ENCODE measurements at regions of chr10 and their contacts with region 1.

Region 1: DNA sequence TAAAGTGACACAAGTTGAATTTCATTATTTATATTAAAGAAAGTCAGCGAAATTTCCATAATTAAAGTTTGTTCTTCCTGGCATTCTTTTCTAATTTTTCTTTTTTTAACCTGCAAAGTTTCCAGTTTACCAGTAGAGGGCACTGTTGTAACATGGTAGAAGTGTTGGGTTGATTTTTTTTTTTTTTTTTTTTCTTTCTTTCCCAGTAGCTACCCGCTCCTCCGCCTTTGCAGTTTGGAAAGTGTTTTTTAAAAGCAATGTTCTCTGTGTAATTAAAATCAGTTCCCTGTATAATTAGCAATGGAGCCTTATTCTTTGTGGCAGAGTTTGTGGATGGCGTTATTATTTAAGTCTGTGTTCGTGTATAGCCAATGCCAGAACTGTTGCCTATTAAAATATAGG is 53.7 kb downstream of the TAF3 start:
- DNase-seq: peak in 1 of 2 experiments; percentile 21
- H3K4me3 ChIP-seq: peak overlapping the region; percentile 25
- H3K4me3 Mint-ChIP-seq: peak overlapping the region; percentile 66
- H3K27ac Mint-ChIP-seq: no peak overlapping the region
- H3K4me1 ChIP-seq: peaks cover 26% of the 10 kb centered on the region
- H3K4me1 Mint-ChIP-seq: peaks cover 11% of the 10 kb centered on the region
- H3K27me3 ChIP-seq: no peaks in the 10 kb centered on the region
- H3K27me3 Mint-ChIP-seq: no peaks in the 10 kb centered on the region
- CTCF ChIP-seq: peak; percentile 83

Region 2: DNA sequence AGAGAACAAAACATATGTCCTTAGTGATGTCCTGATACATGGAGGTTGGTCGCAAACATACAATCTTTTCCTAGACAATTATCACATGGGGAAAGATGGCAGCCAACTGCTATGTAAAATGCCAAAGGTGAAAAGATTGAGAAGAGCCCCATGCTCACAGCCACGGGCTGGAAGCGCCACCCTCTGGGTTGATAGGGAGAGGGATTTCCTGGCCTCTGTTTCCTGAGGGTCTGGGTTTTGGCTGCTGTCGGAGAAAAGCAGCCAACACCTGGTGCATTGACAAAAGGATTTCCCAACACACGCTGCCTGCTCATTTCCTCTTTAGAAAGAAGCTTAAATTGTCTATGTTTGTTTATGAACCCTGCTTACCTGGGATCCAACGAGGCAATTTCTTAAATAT is 249.1 kb before region 1 on chr10:
- CTCF ChIA-PET with region 1: no interaction called
- POLR2A ChIA-PET with region 1: no interaction called
- intact Hi-C with region 1: no loop called
- DNase-seq: peak in 1 of 2 experiments; percentile 42
- H3K4me3 ChIP-seq: no peak overlapping the region
- H3K4me3 Mint-ChIP-seq: no peak overlapping the region
- H3K27ac Mint-ChIP-seq: no peak overlapping the region
- H3K4me1 ChIP-seq: no peaks in the 10 kb centered on the region
- H3K4me1 Mint-ChIP-seq: no peaks in the 10 kb centered on the region
- H3K27me3 ChIP-seq: no peaks in the 10 kb centered on the region
- H3K27me3 Mint-ChIP-seq: peaks cover 3% of the 10 kb centered on the region
- CTCF ChIP-seq: peak in 1 of 2 experiments; percentile 46

Region 3: GRCh38 chr10:8136736-8137135 is 264.7 kb after region 1 on chr10:
- CTCF ChIA-PET with region 1: no interaction called
- POLR2A ChIA-PET with region 1: no interaction called
- intact Hi-C with region 1: no loop called
- DNase-seq: no peak
- H3K4me3 ChIP-seq: no peak overlapping the region
- H3K4me3 Mint-ChIP-seq: no peak overlapping the region
- H3K27ac Mint-ChIP-seq: no peak overlapping the region
- H3K4me1 ChIP-seq: no peaks in the 10 kb centered on the region
- H3K4me1 Mint-ChIP-seq: no peaks in the 10 kb centered on the region
- H3K27me3 ChIP-seq: no peaks in the 10 kb centered on the region
- H3K27me3 Mint-ChIP-seq: no peaks in the 10 kb centered on the region
- CTCF ChIP-seq: no peak

Region 4: DNA sequence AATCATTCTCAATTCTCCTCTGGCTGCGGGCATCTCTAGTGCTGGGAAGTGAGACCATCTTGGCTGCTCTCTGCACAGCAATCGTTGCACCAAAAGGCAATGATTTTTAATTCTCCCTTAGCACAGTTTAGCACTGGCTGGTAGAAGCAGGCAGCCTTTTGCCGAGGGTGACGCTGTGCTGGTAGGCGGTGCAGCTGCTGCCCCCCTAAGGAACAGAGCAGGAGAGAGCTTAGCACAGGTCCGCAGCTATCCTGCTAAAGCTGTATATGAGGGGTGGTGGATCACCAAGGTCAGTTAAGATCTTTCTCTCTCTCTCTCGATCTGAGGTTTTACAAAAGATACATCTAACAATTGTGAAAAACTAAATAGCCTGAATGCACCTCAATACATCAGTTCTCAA is 572.6 kb after region 1 on chr10:
- CTCF ChIA-PET with region 1: interaction called, 3 read pairs
- POLR2A ChIA-PET with region 1: no interaction called
- intact Hi-C with region 1: loop called (anchors 10 kb)
- DNase-seq: peak in 1 of 2 experiments; percentile 40
- H3K4me3 ChIP-seq: no peak overlapping the region
- H3K4me3 Mint-ChIP-seq: no peak overlapping the region
- H3K27ac Mint-ChIP-seq: no peak overlapping the region
- H3K4me1 ChIP-seq: no peaks in the 10 kb centered on the region
- H3K4me1 Mint-ChIP-seq: no peaks in the 10 kb centered on the region
- H3K27me3 ChIP-seq: no peaks in the 10 kb centered on the region; the same call in 1 of the 2 replicates
- H3K27me3 Mint-ChIP-seq: peaks cover 5% of the 10 kb centered on the region
- CTCF ChIP-seq: peak; percentile 25 to 60

Region 5: DNA sequence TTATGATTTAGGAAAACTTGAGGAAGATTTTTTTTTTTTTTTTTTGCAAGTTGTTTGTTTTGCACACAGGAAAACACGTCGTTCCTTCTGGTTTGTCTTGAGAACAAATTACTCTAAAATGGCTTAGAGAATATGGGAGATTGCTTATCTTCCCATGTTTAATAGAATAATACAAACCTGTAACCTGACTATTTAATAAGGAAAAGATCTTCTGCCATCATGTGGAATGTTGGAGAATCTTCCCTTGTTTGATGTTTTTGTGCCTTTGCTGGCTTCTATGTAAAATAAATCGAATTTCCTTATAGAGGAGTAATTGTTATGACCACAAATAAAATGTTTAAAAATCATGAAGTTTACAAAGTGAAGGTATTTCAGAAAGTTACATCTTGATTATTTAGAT is 1001.3 kb after region 1 on chr10:
- CTCF ChIA-PET with region 1: interaction called, 4 read pairs
- POLR2A ChIA-PET with region 1: no interaction called
- intact Hi-C with region 1: loop called (anchors 10 kb)
- DNase-seq: no peak
- H3K4me3 ChIP-seq: no peak overlapping the region
- H3K4me3 Mint-ChIP-seq: no peak overlapping the region
- H3K27ac Mint-ChIP-seq: no peak overlapping the region
- H3K4me1 ChIP-seq: no peaks in the 10 kb centered on the region
- H3K4me1 Mint-ChIP-seq: no peaks in the 10 kb centered on the region
- H3K27me3 ChIP-seq: no peaks in the 10 kb centered on the region
- H3K27me3 Mint-ChIP-seq: peaks cover 6% of the 10 kb centered on the region
- CTCF ChIP-seq: peak; percentile 7 to 25

Region 6: GRCh38 chr10:9302120-9302746 is 1430.2 kb after region 1 on chr10:
- CTCF ChIA-PET with region 1: interaction called, 3 read pairs
- POLR2A ChIA-PET with region 1: no interaction called
- intact Hi-C with region 1: loop called (anchors 10 kb)
- DNase-seq: peak in 1 of 2 experiments; percentile 53
- H3K4me3 ChIP-seq: no peak overlapping the region
- H3K4me3 Mint-ChIP-seq: no peak overlapping the region
- H3K27ac Mint-ChIP-seq: no peak overlapping the region
- H3K4me1 ChIP-seq: no peaks in the 10 kb centered on the region
- H3K4me1 Mint-ChIP-seq: no peaks in the 10 kb centered on the region
- H3K27me3 ChIP-seq: no peaks in the 10 kb centered on the region
- H3K27me3 Mint-ChIP-seq: peaks cover 7% of the 10 kb centered on the region
- CTCF ChIP-seq: peak; percentile 40 to 48

Measured in Caco-2 (cell line).